ENCODE measurements at regions of chr12 and their contacts with region 1.

Region 1: DNA sequence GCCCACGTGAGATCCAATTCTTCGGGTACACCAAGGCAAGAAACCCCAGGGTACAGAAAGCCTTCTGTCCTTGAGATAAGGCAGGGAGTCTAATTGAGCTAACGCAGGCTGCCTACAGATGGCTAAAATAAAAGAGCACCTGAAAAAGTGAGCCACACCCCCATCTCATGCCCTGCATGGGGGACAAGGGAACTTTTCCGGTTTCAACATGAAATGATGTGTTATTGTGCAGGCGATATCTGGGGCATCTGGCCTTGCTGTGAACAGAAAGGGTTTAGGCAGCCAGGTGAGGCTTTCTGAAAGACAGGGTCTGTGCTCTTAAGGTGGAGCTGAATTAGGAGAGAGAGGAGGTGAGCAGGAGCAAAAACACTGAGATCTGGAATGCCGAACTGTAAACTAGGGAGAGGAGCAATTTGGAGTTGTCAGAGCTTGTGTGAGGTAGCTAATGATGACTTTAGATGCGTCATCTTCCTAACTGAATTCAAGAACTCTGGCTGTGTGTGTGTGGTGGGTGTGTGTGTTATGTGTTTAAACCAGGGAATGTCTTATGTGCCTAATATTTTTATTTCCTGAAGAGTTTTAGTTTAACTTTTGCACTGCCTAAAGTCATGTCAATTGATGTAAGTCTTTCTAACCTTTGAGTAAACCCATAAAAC is 20.1 kb upstream of the LDHB start:
- DNase-seq: peak in 11 of 14 experiments; percentile 7 to 62 (median 18)
- ATAC-seq: peak; percentile 42
- H3K4me3 ChIP-seq: peak overlapping the region; percentile 46
- H3K4me3 Mint-ChIP-seq: peak overlapping the region; percentile 77
- H3K27ac ChIP-seq: peak overlapping the region; percentile 43 to 72
- H3K27ac Mint-ChIP-seq: peak overlapping the region; percentile 83
- H3K4me1 ChIP-seq: peaks cover 40% of the 10 kb centered on the region
- H3K4me1 Mint-ChIP-seq: peaks cover 56% of the 10 kb centered on the region
- H3K27me3 ChIP-seq: no peaks in the 10 kb centered on the region
- H3K27me3 Mint-ChIP-seq: no peaks in the 10 kb centered on the region
- CTCF ChIP-seq: no peak

Region 2: DNA sequence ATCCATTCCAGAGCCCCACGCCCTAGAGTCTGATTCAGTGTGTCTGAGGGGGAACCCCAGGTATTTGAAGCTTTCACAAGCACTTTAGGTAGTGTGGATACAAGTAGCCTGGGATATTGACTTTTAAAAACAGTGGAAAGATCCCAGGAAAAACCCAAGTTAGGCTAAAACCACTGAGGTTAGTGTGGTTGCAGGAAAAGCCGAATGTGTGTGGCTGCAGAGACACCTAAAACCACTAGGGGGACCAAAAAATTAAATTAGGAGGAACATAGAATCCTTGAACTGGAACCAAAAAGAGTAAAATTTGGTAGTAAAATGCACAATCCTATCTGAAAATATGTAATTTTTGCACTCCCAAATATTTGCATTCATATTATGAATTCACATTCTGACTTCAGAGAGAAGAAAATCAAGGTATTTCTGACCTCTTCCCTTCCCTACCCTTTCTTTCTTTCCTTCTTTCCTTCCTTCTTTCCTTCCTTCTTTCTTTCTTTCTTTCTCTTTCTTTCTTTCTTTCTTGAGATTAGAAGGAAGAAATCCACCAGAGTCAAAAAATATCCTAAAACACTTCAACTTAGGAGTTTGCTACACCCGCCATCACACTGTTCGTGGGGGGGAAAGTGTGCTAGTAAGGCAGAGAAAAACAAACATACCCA is 380.9 kb before region 1 on chr12:
- CTCF ChIA-PET with region 1: no interaction called
- POLR2A ChIA-PET with region 1: no interaction called
- intact Hi-C with region 1: loop called (anchors 5 kb)
- DNase-seq: peak in 4 of 14 experiments; percentile 18 to 25 (median 23)
- ATAC-seq: no peak
- H3K4me3 ChIP-seq: no peak overlapping the region
- H3K4me3 Mint-ChIP-seq: no peak overlapping the region
- H3K27ac ChIP-seq: no peak overlapping the region
- H3K27ac Mint-ChIP-seq: no peak overlapping the region
- H3K4me1 ChIP-seq: no peaks in the 10 kb centered on the region
- H3K4me1 Mint-ChIP-seq: peaks cover 8% of the 10 kb centered on the region
- H3K27me3 ChIP-seq: no peaks in the 10 kb centered on the region
- H3K27me3 Mint-ChIP-seq: peaks cover 13% of the 10 kb centered on the region
- CTCF ChIP-seq: peak; percentile 75

Region 3: DNA sequence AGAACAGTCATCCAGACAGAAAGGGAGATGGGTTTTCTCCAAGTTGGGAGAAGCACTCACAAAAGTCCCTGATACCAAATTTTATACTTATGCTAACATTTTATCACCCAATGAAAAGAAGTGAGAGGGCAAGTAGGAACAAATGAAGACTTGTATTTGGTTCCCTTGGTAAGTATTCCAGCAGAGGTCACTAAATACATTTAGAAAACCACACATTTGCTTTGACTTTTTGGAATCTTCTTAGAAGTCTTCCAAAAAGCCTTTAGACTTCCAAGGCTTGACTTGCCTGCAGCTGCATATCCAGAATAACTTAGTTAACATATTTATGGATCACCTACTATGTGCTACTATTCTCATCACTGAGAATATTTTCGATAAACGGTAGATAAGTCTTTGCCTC is 70.0 kb before region 1 on chr12:
- CTCF ChIA-PET with region 1: interaction called, 8 read pairs
- POLR2A ChIA-PET with region 1: interaction called, 4 read pairs
- intact Hi-C with region 1: loop called (anchors 1 kb)
- DNase-seq: peak in 3 of 14 experiments; percentile 54 to 60 (median 59)
- ATAC-seq: peak; percentile 58
- H3K4me3 ChIP-seq: no peak overlapping the region
- H3K4me3 Mint-ChIP-seq: no peak overlapping the region
- H3K27ac ChIP-seq: no peak overlapping the region
- H3K27ac Mint-ChIP-seq: no peak overlapping the region
- H3K4me1 ChIP-seq: peaks cover 3% of the 10 kb centered on the region
- H3K4me1 Mint-ChIP-seq: peaks cover 7% of the 10 kb centered on the region
- H3K27me3 ChIP-seq: no peaks in the 10 kb centered on the region
- H3K27me3 Mint-ChIP-seq: no peaks in the 10 kb centered on the region
- CTCF ChIP-seq: peak; percentile 76

Region 4: GRCh38 chr12:21642707-21643389 is 34.9 kb before region 1 on chr12:
- CTCF ChIA-PET with region 1: interaction called, 7 read pairs
- POLR2A ChIA-PET with region 1: interaction called, 9 read pairs
- intact Hi-C with region 1: loop called in 1 of 2 experiments (anchors 5 kb)
- DNase-seq: peak in 1 of 14 experiments; percentile 25
- ATAC-seq: peak; percentile 41
- H3K4me3 ChIP-seq: no peak overlapping the region
- H3K4me3 Mint-ChIP-seq: no peak overlapping the region
- H3K27ac ChIP-seq: no peak overlapping the region
- H3K27ac Mint-ChIP-seq: peak overlapping the region; percentile 84
- H3K4me1 ChIP-seq: peaks cover 27% of the 10 kb centered on the region
- H3K4me1 Mint-ChIP-seq: peaks cover 91% of the 10 kb centered on the region
- H3K27me3 ChIP-seq: no peaks in the 10 kb centered on the region
- H3K27me3 Mint-ChIP-seq: no peaks in the 10 kb centered on the region
- CTCF ChIP-seq: no peak

Region 5: GRCh38 chr12:21657326-21658077 is 20.2 kb before region 1 on chr12 and contains the start of gene LDHB:
- CTCF ChIA-PET with region 1: interaction called, 12 read pairs
- POLR2A ChIA-PET with region 1: interaction called, 152 read pairs
- intact Hi-C with region 1: loop called (anchors 1 to 2 kb)
- DNase-seq: peak; percentile 83 to 96 (median 91)
- ATAC-seq: peak; percentile 92
- H3K4me3 ChIP-seq: peak within 1 kb of the TSS; percentile 87
- H3K4me3 Mint-ChIP-seq: peak within 1 kb of the TSS; percentile 99
- H3K27ac ChIP-seq: peak within 1 kb of the TSS; percentile 56 to 80
- H3K27ac Mint-ChIP-seq: peak within 1 kb of the TSS; percentile 91
- H3K4me1 ChIP-seq: peaks cover 16% of the 10 kb centered on the region
- H3K4me1 Mint-ChIP-seq: peaks cover 77% of the 10 kb centered on the region
- H3K27me3 ChIP-seq: no peaks in the 10 kb centered on the region
- H3K27me3 Mint-ChIP-seq: no peaks in the 10 kb centered on the region
- CTCF ChIP-seq: no peak
- total RNA-seq, gene LDHB: 559 to 605 TPM

Region 6: DNA sequence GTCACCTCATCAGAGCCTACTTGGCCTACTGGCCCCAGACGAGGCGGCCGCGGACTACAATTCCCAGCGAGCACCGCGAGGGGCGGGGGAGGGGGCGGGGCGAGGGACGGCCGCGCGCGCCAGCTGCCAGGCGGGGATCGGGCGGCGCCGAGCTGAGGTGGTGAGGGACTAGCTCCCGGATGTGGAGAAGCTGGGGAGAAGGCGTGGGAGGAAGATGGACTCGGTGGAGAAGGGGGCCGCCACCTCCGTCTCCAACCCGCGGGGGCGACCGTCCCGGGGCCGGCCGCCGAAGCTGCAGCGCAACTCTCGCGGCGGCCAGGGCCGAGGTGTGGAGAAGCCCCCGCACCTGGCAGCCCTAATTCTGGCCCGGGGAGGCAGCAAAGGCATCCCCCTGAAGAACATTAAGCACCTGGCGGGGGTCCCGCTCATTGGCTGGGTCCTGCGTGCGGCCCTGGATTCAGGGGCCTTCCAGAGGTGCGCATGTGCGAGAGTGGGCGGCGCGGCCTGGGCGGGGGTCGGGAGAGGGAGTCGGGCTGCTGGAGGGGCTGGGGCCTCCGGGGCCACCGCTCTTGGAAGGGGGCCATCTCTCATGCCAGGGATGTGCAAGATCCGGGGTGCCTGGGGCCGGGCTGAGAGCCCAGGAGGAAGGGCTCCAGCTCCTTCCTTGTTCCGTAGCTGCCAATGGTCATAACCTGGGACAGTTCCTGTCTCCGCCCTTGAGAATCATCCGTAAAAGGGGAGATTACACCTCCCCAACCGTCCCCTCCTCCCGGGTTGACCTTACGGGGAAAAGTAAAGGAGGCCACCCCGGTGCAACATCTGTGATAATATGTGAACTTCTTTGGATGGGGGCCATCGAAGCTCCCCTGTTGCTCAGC is 368.6 kb after region 1 on chr12 and contains the start of gene CMAS:
- CTCF ChIA-PET with region 1: no interaction called
- POLR2A ChIA-PET with region 1: interaction called, 11 read pairs
- intact Hi-C with region 1: no loop called
- DNase-seq: peak; percentile 62 to 89 (median 77)
- ATAC-seq: peak; percentile 89
- H3K4me3 ChIP-seq: peak within 1 kb of the TSS; percentile 85
- H3K4me3 Mint-ChIP-seq: peak within 1 kb of the TSS; percentile 97
- H3K27ac ChIP-seq: peak within 1 kb of the TSS; percentile 29 to 43
- H3K27ac Mint-ChIP-seq: peak within 1 kb of the TSS; percentile 89
- H3K4me1 ChIP-seq: peaks cover 7% of the 10 kb centered on the region
- H3K4me1 Mint-ChIP-seq: peaks cover 54% of the 10 kb centered on the region
- H3K27me3 ChIP-seq: no peaks in the 10 kb centered on the region
- H3K27me3 Mint-ChIP-seq: no peaks in the 10 kb centered on the region
- CTCF ChIP-seq: no peak
- total RNA-seq, gene CMAS: 5.5 to 7.0 TPM